Esophagus muscularis mucosa (tissue), 4 donors: ENCODE measurements at regions of chr12 and their contacts with region 1.

Region 1: GRCh38 chr12:116455540-116456329 is 103.4 kb upstream of the MAP1LC3B2 start:
- DNase-seq: peak; percentile 96
- H3K4me3 ChIP-seq: peak overlapping the region; percentile 9 to 20 (median 20)
- H3K27ac ChIP-seq: peak overlapping the region; percentile 72 to 88 (median 84)
- H3K4me1 ChIP-seq: peaks cover 11 to 30% (median 27%) of the 10 kb centered on the region in 4 donors
- H3K27me3 ChIP-seq: peaks cover 0 to 5% (median 0%) of the 10 kb centered on the region in 4 donors
- CTCF ChIP-seq: no peak
- EP300 ChIP-seq: peak; percentile 80
- POLR2A ChIP-seq: no peak

Region 2: DNA sequence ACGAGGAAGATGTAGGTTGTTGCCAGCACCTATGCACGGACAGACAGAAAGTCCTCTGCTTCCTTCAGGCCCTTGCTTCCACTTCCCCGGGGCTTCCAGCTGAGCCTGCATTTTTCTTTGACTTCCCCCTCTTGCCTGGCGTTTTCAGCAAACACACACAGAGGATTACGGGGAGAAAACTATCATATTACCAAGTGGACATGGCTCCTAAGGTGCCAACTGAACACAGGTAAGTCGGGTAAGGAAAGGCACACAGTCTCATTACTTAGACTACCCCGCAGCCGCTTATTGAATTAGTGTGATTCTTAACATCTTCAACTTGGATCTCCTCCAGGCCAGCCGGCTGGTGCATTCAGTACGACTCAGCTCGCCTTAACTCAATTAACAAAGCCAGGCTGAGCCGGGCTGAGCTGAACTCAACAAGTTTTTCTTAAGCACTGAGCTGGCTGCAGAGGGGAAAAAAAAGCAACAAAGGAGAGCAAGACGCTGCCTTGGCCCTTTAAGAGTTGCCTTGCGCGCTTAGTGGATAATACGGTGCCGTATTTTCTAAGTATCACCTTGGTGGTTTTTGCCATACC is 84.3 kb after region 1 on chr12:
- intact Hi-C with region 1: loop called (anchors 5 kb)
- DNase-seq: no peak
- H3K4me3 ChIP-seq: peak overlapping the region in 1 of 4 donors; percentile 24
- H3K27ac ChIP-seq: peak overlapping the region; percentile 41 to 61 (median 53)
- H3K4me1 ChIP-seq: peaks cover 14 to 56% (median 46%) of the 10 kb centered on the region in 4 donors
- H3K27me3 ChIP-seq: no peaks in the 10 kb centered on the region
- CTCF ChIP-seq: no peak
- EP300 ChIP-seq: no peak
- POLR2A ChIP-seq: no peak